ENCODE measurements at regions of chr5 and their contacts with region 1.

Region 1: GRCh38 chr5:159987031-159987674 is 21.8 kb upstream of the TTC1 start:
- DNase-seq: peak; percentile 88

Region 2: GRCh38 chr5:159444441-159445082 is 542.6 kb before region 1 on chr5:
- CTCF ChIA-PET with region 1: interaction called, 23 read pairs
- POLR2A ChIA-PET with region 1: no interaction called
- DNase-seq: peak; percentile 42